Gastrocnemius medialis (tissue), 4 donors: ENCODE measurements at regions of chr9 and their contacts with region 1.

Region 1: DNA sequence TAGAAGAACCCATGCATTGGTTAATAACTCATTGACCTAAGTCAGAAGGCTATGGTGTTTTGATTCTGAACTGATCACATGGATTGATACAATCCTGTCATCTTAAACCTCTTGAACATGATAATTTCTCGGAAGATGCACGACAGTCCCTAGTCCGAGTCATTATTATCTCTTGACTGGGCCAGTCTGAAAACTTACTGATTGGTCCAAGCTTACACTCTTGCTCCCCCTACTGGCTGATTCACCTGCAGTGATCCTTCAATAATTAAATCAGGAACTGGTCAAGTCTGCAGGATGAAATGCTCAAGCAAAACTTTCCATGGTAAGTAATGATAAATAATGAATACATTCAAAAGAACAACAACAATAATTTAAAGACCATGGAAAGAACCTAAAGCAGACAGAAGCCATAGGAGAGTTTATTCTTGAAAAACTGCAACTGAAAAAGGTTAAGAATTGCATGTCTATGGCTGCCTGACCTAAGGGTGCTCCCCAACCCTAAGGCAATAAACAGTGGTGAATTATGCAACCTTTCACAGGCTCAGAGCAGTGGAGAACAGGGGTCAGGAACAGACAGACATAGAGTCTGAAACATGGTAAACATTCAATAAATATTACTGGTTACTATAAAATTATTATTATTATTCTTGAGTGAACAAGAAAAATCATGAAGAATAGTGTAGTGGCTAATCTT is 79.3 kb downstream of the BRINP1 start:
- DNase-seq: peak; percentile 39 to 53
- ATAC-seq: peak; percentile 85 to 87
- H3K4me3 ChIP-seq: no peak overlapping the region
- H3K27ac ChIP-seq: no peak overlapping the region
- H3K4me1 ChIP-seq: no peaks in the 10 kb centered on the region
- H3K27me3 ChIP-seq: no peaks in the 10 kb centered on the region
- CTCF ChIP-seq: peak; percentile 78 to 90 (median 82)
- POLR2A ChIP-seq: no peak

Region 2: GRCh38 chr9:117644133-117644931 is 1645.6 kb before region 1 on chr9:
- in situ Hi-C with region 1: loop called in 1 of 4 experiments (anchors 25 kb)
- intact Hi-C with region 1: no loop called
- DNase-seq: peak; percentile 14 to 50
- ATAC-seq: peak; percentile 65 to 66
- H3K4me3 ChIP-seq: peak overlapping the region; percentile 30 to 57 (median 38)
- H3K27ac ChIP-seq: peak overlapping the region in 1 of 4 donors; percentile 24
- H3K4me1 ChIP-seq: peaks cover 0 to 3% of the 10 kb centered on the region in 2 donors
- H3K27me3 ChIP-seq: peaks cover 0 to 17% (median 8%) of the 10 kb centered on the region in 3 donors
- CTCF ChIP-seq: peak; percentile 77 to 91 (median 86)
- POLR2A ChIP-seq: no peak

Region 3: DNA sequence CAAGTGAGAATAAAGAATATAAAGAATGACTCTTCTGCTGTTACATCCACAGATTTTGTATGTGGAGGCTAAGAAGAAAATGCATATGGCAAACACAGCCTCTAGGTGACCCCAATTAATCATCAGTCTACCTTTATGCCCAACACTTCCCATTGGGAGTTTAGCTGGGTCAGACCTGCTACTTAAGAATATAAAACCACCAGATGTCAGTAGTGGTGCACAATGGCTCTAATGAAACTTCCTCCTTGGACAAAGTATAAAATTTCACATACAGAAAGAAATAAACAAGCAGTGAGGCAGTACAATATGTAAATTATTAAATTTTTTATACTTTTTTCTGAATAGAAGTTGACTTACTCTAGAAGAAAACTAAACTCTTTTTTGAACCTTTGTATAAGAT is 460.6 kb before region 1 on chr9:
- in situ Hi-C with region 1: loop called (anchors 5 to 10 kb)
- intact Hi-C with region 1: loop called (anchors 1 kb)
- DNase-seq: no peak
- ATAC-seq: peak; percentile 81
- H3K4me3 ChIP-seq: no peak overlapping the region
- H3K27ac ChIP-seq: no peak overlapping the region
- H3K4me1 ChIP-seq: no peaks in the 10 kb centered on the region
- H3K27me3 ChIP-seq: no peaks in the 10 kb centered on the region
- CTCF ChIP-seq: peak; percentile 40 to 71 (median 52)
- POLR2A ChIP-seq: no peak

Region 4: GRCh38 chr9:118836891-118837290 is 453.0 kb before region 1 on chr9:
- in situ Hi-C with region 1: loop called (anchors 5 to 10 kb)
- intact Hi-C with region 1: no loop called
- DNase-seq: no peak
- ATAC-seq: no peak
- H3K4me3 ChIP-seq: no peak overlapping the region
- H3K27ac ChIP-seq: no peak overlapping the region
- H3K4me1 ChIP-seq: no peaks in the 10 kb centered on the region
- H3K27me3 ChIP-seq: no peaks in the 10 kb centered on the region
- CTCF ChIP-seq: no peak
- POLR2A ChIP-seq: no peak

Region 5: DNA sequence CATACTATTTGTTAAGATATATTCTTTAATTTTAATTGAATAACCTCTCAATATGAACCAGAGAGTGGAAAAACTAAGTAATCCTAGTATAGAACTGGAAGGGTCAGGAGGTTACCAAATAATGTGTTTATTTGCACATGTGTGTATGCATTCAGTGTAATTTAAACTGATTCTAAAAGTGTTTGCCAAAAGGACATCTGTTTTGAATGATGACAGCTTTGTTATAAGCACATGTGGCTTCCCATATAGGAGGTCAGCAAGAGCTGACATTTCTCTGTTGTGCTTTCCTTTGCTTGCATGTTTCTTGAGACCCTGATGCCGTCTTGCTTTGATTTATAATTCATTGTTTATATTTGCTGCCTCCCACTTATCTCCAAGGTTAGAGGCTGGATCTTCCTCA is 304.0 kb before region 1 on chr9:
- in situ Hi-C with region 1: loop called in 1 of 4 experiments (anchors 10 kb)
- intact Hi-C with region 1: loop called (anchors 2 kb)
- DNase-seq: no peak
- ATAC-seq: no peak
- H3K4me3 ChIP-seq: no peak overlapping the region
- H3K27ac ChIP-seq: peak overlapping the region in 1 of 4 donors; percentile 73
- H3K4me1 ChIP-seq: peaks cover 21 to 24% of the 10 kb centered on the region in 2 donors
- H3K27me3 ChIP-seq: no peaks in the 10 kb centered on the region
- CTCF ChIP-seq: no peak
- POLR2A ChIP-seq: no peak

Region 6: DNA sequence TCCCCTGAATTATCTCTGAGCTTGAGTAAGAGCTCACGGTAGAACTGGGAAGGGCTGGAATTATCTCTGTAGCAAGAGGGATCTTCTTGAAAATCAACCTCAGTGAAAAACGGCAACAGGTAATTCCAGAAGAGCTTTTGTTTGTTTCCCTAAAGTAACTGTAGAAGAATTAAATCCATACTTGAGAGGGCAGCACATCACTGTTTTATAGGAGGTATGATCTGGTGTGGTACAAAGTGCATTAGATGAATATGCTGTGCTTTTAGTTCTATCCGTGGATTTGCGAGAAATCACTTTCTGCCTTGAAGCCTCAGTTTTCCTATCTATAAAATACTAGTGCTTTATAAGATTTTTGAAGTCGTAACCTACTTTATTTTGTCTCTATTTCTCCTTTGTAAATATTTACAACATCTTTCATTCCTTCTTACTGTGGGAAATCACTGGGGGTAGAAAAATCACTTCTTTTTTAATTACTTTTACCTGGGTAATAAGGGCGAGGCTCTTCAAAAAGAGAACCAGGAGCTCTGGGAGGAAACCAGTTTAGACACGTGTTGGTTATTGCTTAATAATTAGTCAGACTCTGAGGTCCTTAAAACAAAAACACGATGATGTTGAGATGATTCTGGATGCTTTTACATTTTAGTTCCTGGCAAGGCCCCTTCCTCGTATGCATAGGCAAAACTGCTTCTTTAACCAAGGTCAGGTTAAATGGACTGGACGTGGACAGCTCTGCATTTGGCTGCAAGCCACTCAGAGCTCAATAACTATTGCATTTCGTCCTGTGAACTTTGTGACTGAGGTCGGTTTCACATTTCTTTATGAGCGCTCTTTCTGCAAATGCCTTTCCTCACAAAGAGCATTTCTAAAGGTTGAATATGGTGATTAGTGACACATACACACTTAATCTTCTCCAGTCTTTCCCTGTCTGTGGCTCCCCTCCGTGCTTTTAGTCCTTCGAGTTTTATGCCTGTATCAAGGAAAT is 296.8 kb before region 1 on chr9:
- in situ Hi-C with region 1: loop called in 1 of 4 experiments (anchors 10 kb)
- intact Hi-C with region 1: loop called (anchors 2 kb)
- DNase-seq: no peak
- ATAC-seq: peak; percentile 64 to 66
- H3K4me3 ChIP-seq: peak overlapping the region in 2 of 4 donors; percentile 17 to 19
- H3K27ac ChIP-seq: peak overlapping the region; percentile 57 to 76 (median 70)
- H3K4me1 ChIP-seq: peaks cover 20 to 31% of the 10 kb centered on the region in 2 donors
- H3K27me3 ChIP-seq: no peaks in the 10 kb centered on the region
- CTCF ChIP-seq: peak in 2 of 5 experiments; percentile 10 to 16
- POLR2A ChIP-seq: no peak

Region 7: GRCh38 chr9:120555839-120556238 is 1266.0 kb after region 1 on chr9:
- in situ Hi-C with region 1: no loop called
- intact Hi-C with region 1: no loop called
- DNase-seq: no peak
- ATAC-seq: no peak
- H3K4me3 ChIP-seq: no peak overlapping the region
- H3K27ac ChIP-seq: no peak overlapping the region
- H3K4me1 ChIP-seq: peaks cover 6 to 10% of the 10 kb centered on the region in 2 donors
- H3K27me3 ChIP-seq: no peaks in the 10 kb centered on the region
- CTCF ChIP-seq: no peak
- POLR2A ChIP-seq: no peak